Activated CD4-positive, alpha-beta T cell treated with anti-CD3 and anti-CD28 coated beads for 36 hours (primary cell): ENCODE measurements at regions of chr13 and their contacts with region 1.

Region 1: DNA sequence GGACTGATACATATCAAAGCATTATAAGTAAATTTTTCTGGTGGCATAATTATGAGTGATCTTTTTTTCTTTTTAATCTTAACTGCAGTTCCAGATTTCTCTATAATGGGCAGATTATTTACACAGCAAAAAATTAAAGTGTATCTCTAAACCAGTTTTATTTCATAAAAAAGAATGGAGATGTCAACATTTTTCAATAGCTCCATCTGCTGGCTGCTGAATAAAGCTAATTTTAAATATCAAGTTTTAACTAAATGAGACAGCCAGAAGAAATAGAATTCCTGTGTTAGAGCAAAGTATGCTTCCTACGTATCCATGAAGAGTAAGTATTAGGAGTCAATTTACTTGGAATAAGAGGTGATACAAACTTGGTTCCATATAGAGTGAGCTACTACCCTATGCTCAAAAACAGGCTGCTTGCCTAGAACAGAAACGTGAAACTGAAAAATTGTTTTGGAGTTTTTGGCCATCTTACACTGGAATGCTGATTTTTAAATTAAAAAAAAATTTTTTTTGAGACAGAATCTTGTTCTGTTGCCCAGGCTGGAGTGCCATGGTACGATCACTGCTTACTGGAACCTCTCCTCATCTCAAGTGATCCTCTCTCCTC is 5.0 kb upstream of the PDS5B start:
- DNase-seq: no peak
- ATAC-seq: no peak
- H3K4me3 Mint-ChIP-seq: no peak overlapping the region
- H3K27ac Mint-ChIP-seq: no peak overlapping the region
- H3K4me1 Mint-ChIP-seq: peaks cover 8% of the 10 kb centered on the region
- H3K27me3 Mint-ChIP-seq: peaks cover 3% of the 10 kb centered on the region

Region 2: GRCh38 chr13:32019612-32020233 is 561.6 kb before region 1 on chr13:
- CTCF ChIA-PET with region 1: no interaction called
- POLR2A ChIA-PET with region 1: no interaction called
- intact Hi-C with region 1: loop called in 1 of 2 experiments (anchors 1 kb)
- DNase-seq: peak; percentile 51
- ATAC-seq: peak; percentile 72
- H3K4me3 Mint-ChIP-seq: no peak overlapping the region
- H3K27ac Mint-ChIP-seq: no peak overlapping the region
- H3K4me1 Mint-ChIP-seq: no peaks in the 10 kb centered on the region
- H3K27me3 Mint-ChIP-seq: no peaks in the 10 kb centered on the region

Region 3: GRCh38 chr13:32381539-32381938 is 199.7 kb before region 1 on chr13:
- CTCF ChIA-PET with region 1: interaction called, 5 read pairs
- POLR2A ChIA-PET with region 1: no interaction called
- intact Hi-C with region 1: loop called (anchors 1 to 2 kb)
- DNase-seq: no peak
- ATAC-seq: peak; percentile 30
- H3K4me3 Mint-ChIP-seq: no peak overlapping the region
- H3K27ac Mint-ChIP-seq: no peak overlapping the region
- H3K4me1 Mint-ChIP-seq: no peaks in the 10 kb centered on the region
- H3K27me3 Mint-ChIP-seq: no peaks in the 10 kb centered on the region

Region 4: GRCh38 chr13:32472194-32472621 is 109.1 kb before region 1 on chr13:
- CTCF ChIA-PET with region 1: interaction called, 15 read pairs
- POLR2A ChIA-PET with region 1: no interaction called
- intact Hi-C with region 1: loop called (anchors 1 to 2 kb)
- DNase-seq: no peak
- ATAC-seq: peak; percentile 70
- H3K4me3 Mint-ChIP-seq: no peak overlapping the region
- H3K27ac Mint-ChIP-seq: no peak overlapping the region
- H3K4me1 Mint-ChIP-seq: peaks cover 8% of the 10 kb centered on the region
- H3K27me3 Mint-ChIP-seq: no peaks in the 10 kb centered on the region

Region 5: GRCh38 chr13:32639502-32640105 is 58.3 kb after region 1 on chr13:
- CTCF ChIA-PET with region 1: interaction called, 15 read pairs
- POLR2A ChIA-PET with region 1: no interaction called
- intact Hi-C with region 1: loop called in 1 of 2 experiments (anchors 1 kb)
- DNase-seq: peak; percentile 66
- ATAC-seq: peak; percentile 69
- H3K4me3 Mint-ChIP-seq: no peak overlapping the region
- H3K27ac Mint-ChIP-seq: no peak overlapping the region
- H3K4me1 Mint-ChIP-seq: peaks cover 40% of the 10 kb centered on the region
- H3K27me3 Mint-ChIP-seq: no peaks in the 10 kb centered on the region

Region 6: GRCh38 chr13:33004511-33004910 is 423.2 kb after region 1 on chr13:
- CTCF ChIA-PET with region 1: no interaction called
- POLR2A ChIA-PET with region 1: no interaction called
- intact Hi-C with region 1: no loop called
- DNase-seq: no peak
- ATAC-seq: no peak
- H3K4me3 Mint-ChIP-seq: no peak overlapping the region
- H3K27ac Mint-ChIP-seq: no peak overlapping the region
- H3K4me1 Mint-ChIP-seq: no peaks in the 10 kb centered on the region
- H3K27me3 Mint-ChIP-seq: peaks cover 24% of the 10 kb centered on the region